ENCODE measurements at regions of chr3 and their contacts with region 1.

Region 1: GRCh38 chr3:196198771-196199753 is 12.1 kb downstream of the ZDHHC19 start:
- DNase-seq: no peak
- ATAC-seq: no peak
- H3K4me3 Mint-ChIP-seq: no peak overlapping the region
- H3K27ac Mint-ChIP-seq: no peak overlapping the region
- H3K4me1 Mint-ChIP-seq: peaks cover 32% of the 10 kb centered on the region
- H3K27me3 Mint-ChIP-seq: no peaks in the 10 kb centered on the region
- CTCF ChIP-seq: no peak

Region 2: GRCh38 chr3:196020373-196020772 is 178.7 kb before region 1 on chr3:
- CTCF ChIA-PET with region 1: interaction called, 4 read pairs
- POLR2A ChIA-PET with region 1: no interaction called
- intact Hi-C with region 1: loop called (anchors 2 kb)
- DNase-seq: no peak
- ATAC-seq: no peak
- H3K4me3 Mint-ChIP-seq: no peak overlapping the region
- H3K27ac Mint-ChIP-seq: no peak overlapping the region
- H3K4me1 Mint-ChIP-seq: no peaks in the 10 kb centered on the region
- H3K27me3 Mint-ChIP-seq: peaks cover 4% of the 10 kb centered on the region
- CTCF ChIP-seq: no peak

Region 3: DNA sequence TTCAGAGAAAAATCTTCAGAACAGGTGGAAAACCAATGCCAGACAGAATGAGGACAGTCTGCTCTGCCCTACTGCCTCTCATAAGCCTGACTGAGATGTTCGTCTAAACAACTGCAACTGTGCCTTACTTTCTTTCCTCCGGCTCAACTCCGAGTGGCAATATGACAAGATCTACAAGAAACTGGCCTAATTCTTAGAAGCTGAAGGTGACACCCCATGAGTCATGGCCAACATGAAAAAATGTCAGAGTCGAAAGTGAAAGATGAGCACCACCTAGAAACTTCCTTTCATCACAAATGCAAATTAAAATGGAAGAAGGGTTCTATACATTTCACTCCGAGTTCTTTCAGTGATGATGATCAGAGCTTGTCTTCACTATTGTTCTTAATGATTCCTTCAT is 75.5 kb after region 1 on chr3:
- CTCF ChIA-PET with region 1: no interaction called
- POLR2A ChIA-PET with region 1: no interaction called
- intact Hi-C with region 1: no loop called
- DNase-seq: no peak
- ATAC-seq: peak; percentile 80
- H3K4me3 Mint-ChIP-seq: peak overlapping the region; percentile 33
- H3K27ac Mint-ChIP-seq: peak overlapping the region; percentile 67
- H3K4me1 Mint-ChIP-seq: peaks cover 27% of the 10 kb centered on the region
- H3K27me3 Mint-ChIP-seq: no peaks in the 10 kb centered on the region
- CTCF ChIP-seq: no peak